WTC11 (cell line): ENCODE measurements at regions of chr11 and their contacts with region 1.

Region 1: DNA sequence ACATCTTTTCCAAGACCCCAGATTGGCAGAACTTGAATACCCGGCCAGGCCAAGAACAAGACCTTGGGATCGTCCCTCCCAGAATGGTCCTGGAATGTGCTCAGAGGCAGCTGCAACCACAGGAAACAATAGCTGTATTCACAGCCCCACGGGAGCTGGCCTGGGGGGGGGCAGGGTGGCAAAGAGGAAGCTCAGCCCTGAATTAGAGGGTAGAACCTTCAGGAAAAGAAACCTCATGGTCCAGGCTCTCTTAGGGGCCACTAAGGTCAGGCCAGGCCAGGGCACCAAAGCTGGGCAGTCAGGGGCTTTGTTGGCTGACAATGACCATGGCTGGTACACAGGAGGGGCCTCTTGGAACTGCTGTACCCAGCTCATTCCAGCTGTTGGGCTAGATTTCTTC is 17.3 kb downstream of the RPL27A start:
- DNase-seq: peak; percentile 44
- ATAC-seq: no peak; the same call in 1 of the 2 replicates
- H3K4me3 Mint-ChIP-seq: no peak overlapping the region
- H3K27ac Mint-ChIP-seq: peak overlapping the region; percentile 96
- H3K4me1 Mint-ChIP-seq: peaks cover 59% of the 10 kb centered on the region
- H3K27me3 Mint-ChIP-seq: no peaks in the 10 kb centered on the region
- CTCF ChIP-seq: no peak

Region 2: DNA sequence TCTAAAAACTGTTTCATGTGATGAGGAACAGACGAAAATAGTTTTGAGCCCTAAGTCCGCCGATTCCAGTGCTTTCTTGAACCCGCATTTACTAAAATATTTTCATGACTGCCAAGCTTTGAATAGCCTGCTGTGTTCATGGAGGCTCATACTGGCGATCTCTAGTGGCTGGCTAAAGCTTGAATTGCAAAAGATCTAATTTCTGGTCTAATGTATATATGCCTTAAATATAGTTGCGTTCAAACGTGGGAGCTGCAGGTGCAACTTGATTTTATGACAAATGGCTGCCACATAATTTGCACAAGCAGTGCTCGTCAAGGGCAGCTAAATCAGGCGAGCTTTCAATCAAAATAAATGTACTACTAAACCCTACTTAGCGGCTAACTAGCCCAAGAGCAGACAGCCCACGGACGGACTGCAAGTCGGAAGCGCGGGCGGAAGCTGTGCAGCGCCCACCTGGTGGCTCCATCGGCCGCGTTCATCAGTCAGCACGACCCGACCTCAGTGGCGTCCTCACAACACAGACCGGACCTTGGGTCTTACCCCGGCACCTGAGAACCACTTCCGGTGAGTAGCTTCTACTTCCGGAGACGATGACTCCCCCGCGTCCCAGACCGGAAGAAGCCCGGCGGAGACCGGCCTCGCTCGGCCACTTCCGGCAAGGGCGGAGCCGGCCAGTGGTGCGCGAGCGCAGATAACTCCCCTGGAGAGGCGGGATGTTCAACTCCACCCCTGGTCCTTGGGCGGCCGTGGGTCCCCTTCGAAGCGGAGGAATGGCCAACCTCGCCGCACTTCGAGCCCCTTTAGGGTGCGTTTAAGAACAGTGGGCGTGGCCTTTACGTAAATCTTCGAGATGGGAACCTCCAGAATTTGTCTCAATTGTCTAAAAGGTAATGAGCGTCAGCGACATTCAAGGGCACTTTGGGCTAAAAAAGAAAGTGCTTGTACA is 11.2 kb before region 1 on chr11:
- CTCF ChIA-PET with region 1: interaction called, 18 read pairs
- POLR2A ChIA-PET with region 1: interaction called, 54 read pairs
- DNase-seq: peak; percentile 95
- ATAC-seq: peak; percentile 79
- H3K4me3 Mint-ChIP-seq: peak overlapping the region; percentile 88
- H3K27ac Mint-ChIP-seq: peak overlapping the region; percentile 99
- H3K4me1 Mint-ChIP-seq: peaks cover 59% of the 10 kb centered on the region
- H3K27me3 Mint-ChIP-seq: no peaks in the 10 kb centered on the region
- CTCF ChIP-seq: no peak

Region 3: DNA sequence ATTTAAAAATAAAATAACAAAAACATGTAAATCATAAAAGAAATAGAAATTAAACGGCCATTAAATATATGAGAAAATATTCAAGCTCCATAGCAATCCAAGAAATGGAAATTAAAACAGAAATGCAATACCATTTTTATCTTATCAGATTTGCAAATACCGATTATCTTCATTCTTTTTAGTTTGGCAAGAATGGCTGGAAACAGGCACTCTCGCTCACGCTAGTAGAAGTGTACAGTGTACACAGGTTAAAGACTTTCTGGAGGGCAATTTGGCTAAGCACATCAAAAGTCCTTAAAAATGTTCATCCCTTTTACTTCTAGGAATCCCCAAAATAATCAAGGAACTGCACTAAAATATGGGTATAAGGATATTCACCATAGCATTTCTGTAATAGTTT is 151.4 kb after region 1 on chr11:
- CTCF ChIA-PET with region 1: no interaction called
- POLR2A ChIA-PET with region 1: no interaction called
- DNase-seq: no peak
- ATAC-seq: no peak
- H3K4me3 Mint-ChIP-seq: no peak overlapping the region
- H3K27ac Mint-ChIP-seq: no peak overlapping the region
- H3K4me1 Mint-ChIP-seq: 0 out of 2 replicates have a peak, but pooled peaks cover 4% of the 10 kb centered on the region
- H3K27me3 Mint-ChIP-seq: no peaks in the 10 kb centered on the region
- CTCF ChIP-seq: no peak